ENCODE measurements at regions of chr1 and their contacts with region 1.

Region 1: DNA sequence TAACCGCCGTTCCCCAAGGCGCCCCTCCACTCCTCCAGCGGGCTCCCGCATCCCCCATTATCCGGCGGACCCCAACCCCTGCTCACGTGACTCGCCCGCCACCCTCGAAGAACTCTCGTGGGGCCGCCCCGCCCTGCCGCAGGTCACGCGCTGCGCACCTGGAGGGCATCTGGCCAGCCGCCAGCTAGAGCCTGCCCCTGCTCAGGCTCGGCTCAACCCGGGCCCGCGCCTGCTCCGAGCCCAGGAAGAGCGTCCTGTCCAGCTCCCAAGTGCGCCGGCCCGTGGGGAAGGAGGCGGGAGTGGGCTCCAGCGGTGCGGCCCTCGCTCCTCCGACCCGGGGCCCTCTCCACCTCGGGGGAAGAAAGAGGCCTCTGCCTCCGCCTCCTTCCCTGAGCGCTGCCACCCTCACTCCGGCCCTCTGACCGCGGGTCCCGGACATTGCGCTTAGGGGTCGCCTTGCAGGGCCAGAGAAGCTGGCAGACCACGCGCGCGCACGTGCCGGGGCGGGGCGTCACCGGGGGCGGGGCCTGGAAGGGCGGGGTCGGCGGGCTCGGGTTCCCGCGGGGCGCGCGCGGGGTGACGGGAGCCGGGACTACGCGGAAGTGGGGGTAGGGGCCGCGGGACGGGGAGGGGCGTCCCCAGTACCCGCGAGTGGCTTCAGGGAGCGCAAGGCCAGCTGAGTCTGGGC is 28.4 kb downstream of the HMGN2 start:
- DNase-seq: no peak
- H3K4me3 ChIP-seq: peak overlapping the region; percentile 87
- H3K27me3 ChIP-seq: no peaks in the 10 kb centered on the region
- CTCF ChIP-seq: no peak

Region 2: GRCh38 chr1:26317612-26318337 is 182.9 kb before region 1 on chr1 and contains the start of gene CD52:
- CTCF ChIA-PET with region 1: no interaction called
- POLR2A ChIA-PET with region 1: no interaction called
- DNase-seq: no peak
- H3K4me3 ChIP-seq: no peak within 1 kb of the TSS
- H3K27me3 ChIP-seq: peaks cover 1% of the 10 kb centered on the region
- CTCF ChIP-seq: no peak
- polyA plus RNA-seq, gene CD52: not detected in 2 replicates

Region 3: GRCh38 chr1:26482921-26483680 is 17.5 kb before region 1 on chr1:
- CTCF ChIA-PET with region 1: interaction called, 16 read pairs
- POLR2A ChIA-PET with region 1: interaction called, 3 read pairs
- DNase-seq: no peak
- H3K4me3 ChIP-seq: no peak overlapping the region
- H3K27me3 ChIP-seq: no peaks in the 10 kb centered on the region
- CTCF ChIP-seq: no peak

Region 4: DNA sequence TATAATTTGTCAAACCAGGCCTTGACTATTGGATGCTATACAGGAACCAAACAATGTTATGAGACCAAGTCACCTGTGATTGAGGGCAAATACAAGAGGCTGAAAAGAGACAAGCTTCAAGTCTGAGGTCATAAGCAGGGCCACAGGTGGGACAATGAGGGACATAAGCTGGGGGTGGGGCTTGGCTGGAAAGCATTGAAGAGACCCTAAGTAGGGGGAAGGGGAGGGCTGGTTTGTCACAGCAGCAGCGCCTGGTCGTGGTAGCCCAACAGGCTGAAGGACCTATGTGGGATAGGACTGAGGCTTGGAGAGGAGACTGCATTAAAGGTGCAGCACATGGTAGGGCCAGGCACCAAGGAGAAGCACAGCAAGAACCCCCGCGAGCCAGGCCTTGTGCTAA is 10.5 kb before region 1 on chr1:
- CTCF ChIA-PET with region 1: interaction called, 18 read pairs
- POLR2A ChIA-PET with region 1: no interaction called
- DNase-seq: no peak
- H3K4me3 ChIP-seq: no peak overlapping the region
- H3K27me3 ChIP-seq: no peaks in the 10 kb centered on the region
- CTCF ChIP-seq: no peak

Region 5: GRCh38 chr1:26529655-26530409 is 29.2 kb after region 1 on chr1 and contains the start of gene RPS6KA1:
- CTCF ChIA-PET with region 1: interaction called, 10 read pairs
- POLR2A ChIA-PET with region 1: no interaction called
- DNase-seq: no peak
- H3K4me3 ChIP-seq: peak within 1 kb of the TSS; percentile 47
- H3K27me3 ChIP-seq: no peaks in the 10 kb centered on the region
- CTCF ChIP-seq: no peak
- polyA plus RNA-seq, gene RPS6KA1: 2.5 and 3.2 TPM in 2 replicates